Activated CD8-positive, alpha-beta memory T cell treated with anti-CD3 and anti-CD28 coated beads, Interleukin-2, amount 10 ng/mL, durations not matched to agents 7 days and 5 days (primary cell): ENCODE measurements at regions of chr7 and their contacts with region 1.

Region 1: DNA sequence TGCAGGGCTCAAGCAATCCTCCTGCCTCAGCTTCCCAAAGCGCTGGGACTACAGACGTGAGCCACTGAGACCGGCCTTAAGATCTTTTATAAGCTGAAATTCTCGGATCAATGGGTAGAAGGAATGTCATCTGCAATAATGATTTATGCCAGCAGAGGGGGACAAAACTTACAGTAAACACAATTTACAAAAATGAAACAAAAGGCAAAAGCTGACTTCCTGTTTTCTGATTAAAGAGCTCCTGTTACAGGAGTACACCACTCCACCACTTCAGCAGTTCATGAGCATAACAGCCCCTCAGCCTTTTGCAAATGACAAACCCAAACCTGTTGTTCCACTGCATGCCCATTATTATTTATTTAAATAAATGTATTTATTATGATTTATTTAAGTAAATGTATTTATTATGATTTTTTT is 88.5 kb upstream of the ATP6V0A4 start:
- DNase-seq: peak; percentile 54
- ATAC-seq: peak; percentile 83
- H3K4me3 Mint-ChIP-seq: peak overlapping the region; percentile 30
- H3K27ac Mint-ChIP-seq: peak overlapping the region; percentile 85
- H3K4me1 Mint-ChIP-seq: peaks cover 29% of the 10 kb centered on the region
- H3K27me3 Mint-ChIP-seq: no peaks in the 10 kb centered on the region

Region 2: GRCh38 chr7:138797841-138798271 is 88.7 kb before region 1 on chr7 and contains the starts of genes ATP6V0A4 and TMEM213:
- CTCF ChIA-PET with region 1: no interaction called
- DNase-seq: no peak
- ATAC-seq: no peak
- H3K4me3 Mint-ChIP-seq: no peak within 1 kb of the TSS
- H3K27ac Mint-ChIP-seq: no peak within 1 kb of the TSS
- H3K4me1 Mint-ChIP-seq: peaks cover 12% of the 10 kb centered on the region
- H3K27me3 Mint-ChIP-seq: peaks cover 14% of the 10 kb centered on the region
- total RNA-seq, gene ATP6V0A4: not detected
- total RNA-seq, gene TMEM213: 0.06 TPM in 1 of 2 experiments, not detected in the other

Region 3: DNA sequence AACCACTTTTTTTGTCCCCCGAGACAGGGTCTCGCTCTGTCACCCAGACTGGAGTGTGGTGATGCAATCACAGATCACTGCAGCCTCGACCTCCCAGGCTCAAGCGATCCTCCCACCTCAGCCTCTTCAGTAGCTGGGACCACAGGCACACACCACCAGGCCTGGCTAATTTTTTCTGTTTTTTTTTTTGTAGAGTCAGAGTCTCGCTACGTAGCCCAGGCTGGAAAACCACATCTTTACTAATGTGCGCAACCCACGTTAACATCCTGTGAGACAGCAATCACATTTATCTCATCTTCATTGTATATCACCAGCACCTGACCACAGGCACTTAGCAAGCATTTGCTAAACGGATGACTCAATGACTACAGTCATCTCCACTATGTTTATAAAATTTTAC is 10.7 kb before region 1 on chr7:
- CTCF ChIA-PET with region 1: interaction called, 19 read pairs
- DNase-seq: peak; percentile 88
- ATAC-seq: peak; percentile 99
- H3K4me3 Mint-ChIP-seq: no peak overlapping the region
- H3K27ac Mint-ChIP-seq: peak overlapping the region; percentile 81
- H3K4me1 Mint-ChIP-seq: peaks cover 22% of the 10 kb centered on the region
- H3K27me3 Mint-ChIP-seq: no peaks in the 10 kb centered on the region

Region 4: DNA sequence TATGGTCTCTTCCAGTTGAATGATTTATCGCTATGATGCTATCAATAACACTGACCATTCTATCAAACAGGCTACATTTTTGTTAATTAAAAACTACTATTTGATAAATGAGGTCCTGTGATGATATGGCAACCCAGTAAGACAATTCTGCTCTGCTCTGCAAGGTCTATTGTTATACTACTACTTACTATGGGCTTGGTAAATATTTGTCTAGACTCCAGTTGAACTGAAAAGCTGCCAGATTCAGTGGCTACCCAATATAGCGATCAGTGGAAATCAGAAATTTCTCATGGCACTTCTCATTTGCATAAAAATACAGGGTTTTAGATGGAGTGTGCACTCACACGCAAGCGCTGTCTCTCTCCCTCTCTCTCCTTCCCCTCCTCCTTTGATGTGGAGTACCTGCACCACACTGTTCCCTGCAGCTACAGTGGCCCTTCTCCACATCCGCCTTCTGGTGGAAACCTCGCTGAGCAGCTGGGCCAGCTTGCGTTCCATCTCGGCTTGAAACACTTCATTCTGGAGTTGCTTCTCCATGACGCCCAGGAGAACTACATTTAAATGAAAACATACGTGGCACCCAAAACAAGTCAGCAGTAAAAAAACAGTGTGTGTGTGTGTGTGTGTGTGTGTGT is 16.8 kb after region 1 on chr7:
- CTCF ChIA-PET with region 1: interaction called, 22 read pairs
- DNase-seq: peak; percentile 85
- ATAC-seq: peak; percentile 94
- H3K4me3 Mint-ChIP-seq: peak overlapping the region; percentile 40
- H3K27ac Mint-ChIP-seq: peak overlapping the region; percentile 60
- H3K4me1 Mint-ChIP-seq: peaks cover 36% of the 10 kb centered on the region
- H3K27me3 Mint-ChIP-seq: peaks cover 32% of the 10 kb centered on the region

Region 5: DNA sequence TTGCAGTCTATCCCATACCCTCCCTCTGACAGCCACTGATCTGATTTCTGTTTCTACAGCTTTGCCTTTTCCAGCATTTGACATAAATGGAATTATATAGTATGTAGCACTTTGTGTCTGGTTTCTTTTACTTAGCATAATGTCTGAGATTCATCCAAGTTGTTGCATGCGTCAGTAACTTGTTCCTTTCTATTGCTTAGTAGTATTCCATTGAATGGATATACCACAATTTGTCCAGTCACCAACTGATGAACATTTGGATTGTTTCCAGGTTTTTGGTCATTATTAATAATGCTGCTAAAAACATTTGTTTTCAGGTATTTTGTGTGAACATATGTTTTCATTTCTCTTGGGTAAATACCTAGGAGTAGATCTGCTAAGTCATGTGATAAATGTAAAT is 101.2 kb after region 1 on chr7:
- CTCF ChIA-PET with region 1: interaction called, 24 read pairs
- DNase-seq: no peak
- ATAC-seq: no peak
- H3K4me3 Mint-ChIP-seq: no peak overlapping the region
- H3K27ac Mint-ChIP-seq: no peak overlapping the region
- H3K4me1 Mint-ChIP-seq: peaks cover under 1% of the 10 kb centered on the region
- H3K27me3 Mint-ChIP-seq: peaks cover 49% of the 10 kb centered on the region

Region 6: DNA sequence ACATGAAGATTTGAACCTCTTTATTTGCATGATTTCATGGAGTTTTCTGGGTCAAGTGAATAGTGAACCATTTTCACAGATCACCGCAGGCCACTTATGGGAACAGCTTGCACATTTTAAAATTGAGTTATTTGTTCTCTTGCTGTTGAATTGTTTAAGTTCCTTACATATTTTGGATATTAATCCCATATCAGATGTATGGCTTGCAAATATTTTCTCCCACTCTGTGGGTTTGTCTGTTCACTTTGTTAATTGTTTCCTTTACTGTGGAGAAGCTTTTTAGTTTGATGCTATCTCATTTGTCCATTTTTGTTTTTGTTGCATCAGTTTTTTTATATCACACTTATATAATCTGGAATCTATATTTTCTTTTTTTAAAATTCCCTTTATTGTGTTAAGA is 163.4 kb after region 1 on chr7:
- CTCF ChIA-PET with region 1: interaction called, 12 read pairs
- DNase-seq: no peak
- ATAC-seq: no peak
- H3K4me3 Mint-ChIP-seq: no peak overlapping the region
- H3K27ac Mint-ChIP-seq: peak overlapping the region; percentile 50
- H3K4me1 Mint-ChIP-seq: peaks cover 74% of the 10 kb centered on the region
- H3K27me3 Mint-ChIP-seq: no peaks in the 10 kb centered on the region

Region 7: DNA sequence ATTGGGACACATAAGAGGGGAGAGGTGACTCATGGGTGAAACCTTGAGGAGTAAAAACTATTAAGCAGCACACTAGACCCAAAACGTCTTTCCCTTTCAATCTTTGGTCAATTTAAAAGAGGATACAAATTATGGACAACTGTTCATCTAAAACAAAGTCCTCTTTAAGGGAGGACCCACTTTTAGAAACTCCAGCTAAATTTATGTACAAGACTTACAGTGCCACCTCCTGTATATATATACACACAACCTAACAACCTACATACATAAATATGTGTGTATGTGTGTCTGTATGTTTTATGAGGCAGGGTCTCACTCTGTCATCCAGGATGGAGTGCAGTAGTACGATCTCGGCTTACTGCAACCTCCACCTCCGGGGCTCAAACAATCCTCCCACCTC is 241.1 kb after region 1 on chr7:
- CTCF ChIA-PET with region 1: interaction called, 10 read pairs
- DNase-seq: no peak
- ATAC-seq: peak; percentile 57
- H3K4me3 Mint-ChIP-seq: no peak overlapping the region
- H3K27ac Mint-ChIP-seq: no peak overlapping the region
- H3K4me1 Mint-ChIP-seq: peaks cover 30% of the 10 kb centered on the region
- H3K27me3 Mint-ChIP-seq: peaks cover 4% of the 10 kb centered on the region

Region 8: DNA sequence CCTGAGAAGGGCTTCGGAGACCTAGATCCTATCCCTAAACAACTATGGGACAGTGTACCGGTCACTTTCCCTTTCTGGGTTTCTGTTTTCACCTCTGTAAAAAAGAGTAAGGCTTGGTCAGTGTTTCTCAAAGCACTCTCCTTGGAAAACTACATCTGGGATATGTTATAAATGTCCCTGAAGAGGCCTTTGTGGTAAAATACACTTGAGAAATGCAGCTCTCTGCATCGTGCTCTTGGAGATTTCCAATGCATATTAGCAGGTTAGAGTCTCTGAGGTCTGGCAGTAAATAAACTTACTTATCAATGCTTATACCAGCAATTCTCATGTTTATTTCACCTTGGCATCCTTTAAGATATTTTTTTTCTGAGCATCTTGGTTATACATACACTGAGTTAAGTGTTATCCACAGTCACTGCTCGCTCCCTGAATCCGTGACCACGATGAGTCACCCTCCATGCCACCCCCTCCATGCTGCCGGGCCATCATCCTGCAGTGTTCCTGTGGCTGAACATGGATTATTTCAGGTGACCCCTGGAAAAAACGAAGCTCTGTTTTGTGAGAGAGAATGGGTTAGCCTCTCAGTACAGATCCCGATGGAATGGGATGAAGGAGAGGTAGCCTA is 939.3 kb after region 1 on chr7:
- CTCF ChIA-PET with region 1: no interaction called
- DNase-seq: no peak
- ATAC-seq: no peak
- H3K4me3 Mint-ChIP-seq: no peak overlapping the region
- H3K27ac Mint-ChIP-seq: no peak overlapping the region
- H3K4me1 Mint-ChIP-seq: peaks cover 17% of the 10 kb centered on the region
- H3K27me3 Mint-ChIP-seq: peaks cover 24% of the 10 kb centered on the region